ENCODE measurements at regions of chr17 and their contacts with region 1.

Region 1: DNA sequence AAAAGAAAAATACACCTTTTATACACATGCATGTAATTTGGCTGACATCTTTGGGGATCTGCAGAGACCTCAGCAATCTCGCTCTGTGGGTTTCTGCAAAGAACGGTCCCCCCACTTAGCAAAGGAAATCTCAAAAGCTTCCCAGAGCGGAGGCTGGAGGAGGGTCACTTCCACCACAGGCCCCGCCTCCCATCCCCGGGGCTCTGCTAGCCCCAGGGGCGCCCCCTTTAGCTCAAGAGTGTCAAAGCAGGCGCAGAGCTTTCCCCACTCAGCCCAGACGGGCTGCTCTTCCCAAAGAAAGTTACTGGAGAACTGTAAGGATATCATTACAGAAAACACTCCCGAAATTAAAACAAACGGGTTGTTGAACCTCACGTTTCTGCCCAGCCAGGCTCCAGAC is 11.4 kb downstream of the SLC13A5 start:
- DNase-seq: peak in 1 of 2 donors; percentile 19
- ATAC-seq: no peak

Region 2: GRCh38 chr17:6666077-6666521 is 35.6 kb before region 1 on chr17:
- intact Hi-C with region 1: no loop called
- DNase-seq: peak; percentile 59 to 60
- ATAC-seq: peak; percentile 95

Region 3: DNA sequence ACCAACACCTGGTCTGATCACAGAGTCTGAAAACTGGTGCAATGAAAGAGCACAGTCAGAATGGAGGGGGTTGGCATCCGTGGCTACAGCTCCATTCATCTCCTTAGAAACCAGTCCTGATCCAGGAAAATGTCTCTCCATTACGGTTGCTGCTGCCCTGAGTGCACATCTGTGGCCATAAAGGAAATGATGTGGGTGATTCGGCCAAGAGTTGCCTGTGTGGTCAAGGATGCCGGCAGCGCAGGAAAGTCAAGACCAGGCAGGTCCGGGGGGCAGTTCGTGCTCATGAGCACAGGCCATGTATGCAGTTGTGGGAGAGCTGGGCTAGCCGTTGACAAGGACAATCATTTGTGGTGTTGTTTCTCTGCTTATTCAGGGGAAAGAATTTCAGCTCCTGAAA is 60.1 kb after region 1 on chr17:
- intact Hi-C with region 1: loop called in 1 of 2 experiments (anchors 10 kb)
- DNase-seq: no peak
- ATAC-seq: no peak